Heart left ventricle (tissue), 16 donors: ENCODE measurements at regions of chr16 and their contacts with region 1.

Region 1: DNA sequence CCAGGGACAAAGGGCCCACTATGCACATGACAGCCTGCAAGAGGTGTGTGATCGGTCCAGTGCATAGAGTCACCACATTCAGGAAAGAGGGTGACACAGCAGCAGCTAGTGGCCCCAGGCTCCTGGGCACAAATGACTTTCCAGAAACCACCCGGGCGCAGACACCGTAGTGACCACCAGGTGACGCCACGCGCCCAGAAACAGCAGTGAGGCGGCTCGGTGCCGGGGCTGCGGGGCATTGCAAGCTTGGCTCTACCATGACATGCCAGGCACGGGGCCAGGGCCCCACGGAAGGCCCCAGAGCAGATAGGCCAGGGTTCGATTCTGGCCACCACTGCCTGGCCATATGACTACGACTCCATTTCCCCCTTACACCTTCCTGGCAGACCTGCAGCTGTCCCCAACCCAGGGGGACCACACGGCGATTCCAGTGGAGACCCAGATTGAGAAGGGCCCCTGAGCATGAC is 6.7 kb downstream of the RHBDF1 start:
- DNase-seq: peak; percentile 81 to 92 (median 83)
- ATAC-seq: peak; percentile 50 to 81 (median 60)
- H3K4me3 ChIP-seq: no peak overlapping the region
- H3K27ac ChIP-seq: peak overlapping the region in 1 of 12 donors; percentile 20
- H3K4me1 ChIP-seq: peaks cover 0 to 56% (median 49%) of the 10 kb centered on the region in 12 donors
- H3K27me3 ChIP-seq: no peaks in the 10 kb centered on the region
- CTCF ChIP-seq: peak; percentile 92 to 99 (median 96)
- POLR2A ChIP-seq: no peak

Region 2: DNA sequence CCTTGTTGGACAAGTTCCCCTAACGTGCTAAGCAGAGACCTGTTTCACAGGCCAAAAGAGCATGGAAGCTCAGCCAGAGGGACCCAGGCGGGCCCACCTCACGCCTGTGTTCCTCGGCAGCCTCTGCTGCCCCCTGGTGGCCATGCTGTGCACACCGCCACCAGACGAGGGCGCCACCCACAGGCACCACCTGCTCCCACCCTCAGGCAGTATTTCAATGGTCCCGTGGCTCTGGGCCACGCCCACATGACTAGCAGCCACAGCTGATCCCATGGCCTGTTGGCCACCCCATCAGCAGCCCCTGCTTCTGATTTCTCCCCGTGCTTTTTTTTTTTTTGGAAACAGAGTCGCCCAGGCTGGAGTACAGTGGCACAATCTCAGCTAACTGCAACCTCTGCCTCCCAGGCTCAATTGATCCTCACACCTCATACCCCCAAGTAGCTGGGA is 31.3 kb after region 1 on chr16:
- intact Hi-C with region 1: loop called (anchors 1 to 2 kb)
- DNase-seq: peak; percentile 86 to 94 (median 90)
- ATAC-seq: peak; percentile 74 to 91 (median 81)
- H3K4me3 ChIP-seq: no peak overlapping the region
- H3K27ac ChIP-seq: no peak overlapping the region
- H3K4me1 ChIP-seq: peaks cover 7 to 31% (median 20%) of the 10 kb centered on the region in 12 donors
- H3K27me3 ChIP-seq: no peaks in the 10 kb centered on the region
- CTCF ChIP-seq: peak in 11 of 12 donors; percentile 96 to 100 (median 99)
- POLR2A ChIP-seq: no peak